Calu3 (cell line): ENCODE measurements at regions of chr9 and their contacts with region 1.

Region 1: GRCh38 chr9:72443855-72444254 is 77.6 kb upstream of the TMC1 start:
- DNase-seq: no peak
- H3K4me3 Mint-ChIP-seq: no peak overlapping the region
- H3K27ac Mint-ChIP-seq: peak overlapping the region; percentile 30
- H3K4me1 Mint-ChIP-seq: peaks cover 29% of the 10 kb centered on the region
- H3K27me3 Mint-ChIP-seq: no peaks in the 10 kb centered on the region
- CTCF ChIP-seq: no peak

Region 2: DNA sequence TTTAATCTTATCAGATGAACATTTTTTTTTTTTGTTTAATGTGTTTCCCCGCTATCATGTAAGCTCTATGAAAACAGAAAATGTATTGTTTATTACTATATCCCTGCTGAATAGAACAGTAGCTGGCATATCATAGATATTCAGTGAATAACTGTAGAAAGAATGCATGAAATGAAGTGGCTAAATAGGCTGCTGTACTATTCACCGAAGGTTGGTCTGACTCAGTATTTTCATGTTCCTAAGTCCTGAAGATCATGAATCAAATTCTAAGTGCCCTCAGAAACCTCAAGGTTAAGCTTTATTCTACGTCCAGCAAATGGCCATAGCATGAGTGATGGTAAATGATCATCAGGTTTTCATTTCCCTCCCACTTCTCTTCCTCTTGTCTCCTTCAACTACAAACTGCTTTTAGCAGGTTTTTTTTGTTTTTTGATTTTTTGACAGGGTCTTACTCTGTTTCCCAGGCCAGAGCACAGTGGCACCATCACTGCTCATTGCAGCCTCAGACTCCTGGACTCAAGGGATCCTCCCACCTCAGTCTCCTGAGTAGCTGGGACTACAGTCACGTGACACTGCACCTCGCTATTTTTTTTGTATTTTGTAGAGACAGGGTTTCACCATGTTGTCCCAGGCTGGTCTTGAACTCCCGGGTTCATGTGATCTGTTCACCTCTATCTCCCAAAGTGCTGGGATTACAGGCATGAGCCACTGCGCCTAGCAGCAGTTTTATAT is 59.7 kb before region 1 on chr9:
- CTCF ChIA-PET with region 1: no interaction called
- intact Hi-C with region 1: no loop called
- DNase-seq: no peak
- H3K4me3 Mint-ChIP-seq: no peak overlapping the region
- H3K27ac Mint-ChIP-seq: no peak overlapping the region
- H3K4me1 Mint-ChIP-seq: no peaks in the 10 kb centered on the region
- H3K27me3 Mint-ChIP-seq: no peaks in the 10 kb centered on the region
- CTCF ChIP-seq: no peak

Region 3: DNA sequence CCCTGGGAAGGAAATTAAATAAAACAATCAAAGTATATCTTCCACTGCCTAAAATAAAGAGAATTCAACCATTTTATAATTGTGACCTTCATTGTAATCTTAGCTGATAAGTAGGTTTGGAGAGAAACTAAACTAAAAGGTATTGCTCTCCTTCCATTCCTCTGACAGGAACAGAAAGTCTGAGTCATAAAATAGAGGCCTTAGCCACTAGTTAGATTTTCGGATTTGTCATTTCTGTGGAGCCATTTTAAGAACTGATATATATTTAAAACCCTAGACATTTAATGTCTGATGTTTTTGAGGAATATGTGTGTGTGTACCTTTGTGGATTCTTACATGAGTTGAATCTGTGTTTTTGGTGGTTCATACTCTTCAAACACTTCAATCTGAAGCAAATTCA is 65.8 kb after region 1 on chr9:
- CTCF ChIA-PET with region 1: no interaction called
- intact Hi-C with region 1: no loop called
- DNase-seq: no peak
- H3K4me3 Mint-ChIP-seq: no peak overlapping the region
- H3K27ac Mint-ChIP-seq: peak overlapping the region; percentile 70
- H3K4me1 Mint-ChIP-seq: peaks cover 13% of the 10 kb centered on the region
- H3K27me3 Mint-ChIP-seq: no peaks in the 10 kb centered on the region
- CTCF ChIP-seq: no peak

Region 4: DNA sequence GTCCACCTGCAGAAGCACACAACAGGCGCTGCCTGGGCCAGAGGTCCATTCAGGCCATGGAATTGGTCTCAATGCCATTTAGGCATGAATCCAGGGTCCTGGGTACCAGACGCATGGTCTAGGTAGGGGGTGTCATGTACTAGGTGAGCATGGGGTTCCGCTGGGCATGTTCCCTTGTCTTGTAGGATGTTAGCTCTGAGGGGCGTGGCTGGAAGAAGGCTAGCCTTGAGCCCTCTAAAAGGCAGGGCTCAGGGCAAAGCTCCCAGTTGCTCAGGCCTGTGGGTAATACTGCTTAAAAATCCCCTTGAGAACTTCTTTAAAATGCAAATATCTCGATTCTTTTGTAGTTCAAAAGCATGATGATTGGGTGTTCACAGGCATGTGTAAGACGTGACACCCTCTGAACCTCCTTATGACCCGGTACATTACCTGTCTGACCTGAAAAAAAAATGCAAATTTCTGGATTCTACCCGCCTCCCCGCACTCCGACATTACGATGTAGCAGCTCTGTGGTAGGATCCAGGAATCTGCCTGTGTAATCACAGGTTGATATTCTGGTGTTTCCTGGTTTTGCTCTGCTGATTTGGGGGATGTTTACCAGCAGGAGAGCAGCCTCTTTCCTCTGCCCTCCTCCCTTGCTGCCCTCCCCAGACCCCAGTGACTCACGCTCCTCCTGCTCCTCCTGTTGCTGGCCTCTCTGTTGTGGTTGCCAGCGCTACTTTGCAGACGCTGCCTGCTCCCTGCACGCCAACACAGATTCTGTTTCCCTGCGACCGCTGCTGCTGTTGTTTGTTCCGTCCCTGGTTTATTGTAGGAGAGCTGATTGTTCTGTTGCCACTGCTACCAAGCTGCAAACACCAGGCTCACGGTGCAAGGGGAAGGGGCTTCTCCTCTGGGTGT is 83.3 kb after region 1 on chr9:
- CTCF ChIA-PET with region 1: interaction called, 4 read pairs
- intact Hi-C with region 1: loop called (anchors 10 kb)
- DNase-seq: peak; percentile 77
- H3K4me3 Mint-ChIP-seq: peak overlapping the region; percentile 49
- H3K27ac Mint-ChIP-seq: peak overlapping the region; percentile 70
- H3K4me1 Mint-ChIP-seq: peaks cover 27% of the 10 kb centered on the region
- H3K27me3 Mint-ChIP-seq: no peaks in the 10 kb centered on the region
- CTCF ChIP-seq: no peak

Region 5: DNA sequence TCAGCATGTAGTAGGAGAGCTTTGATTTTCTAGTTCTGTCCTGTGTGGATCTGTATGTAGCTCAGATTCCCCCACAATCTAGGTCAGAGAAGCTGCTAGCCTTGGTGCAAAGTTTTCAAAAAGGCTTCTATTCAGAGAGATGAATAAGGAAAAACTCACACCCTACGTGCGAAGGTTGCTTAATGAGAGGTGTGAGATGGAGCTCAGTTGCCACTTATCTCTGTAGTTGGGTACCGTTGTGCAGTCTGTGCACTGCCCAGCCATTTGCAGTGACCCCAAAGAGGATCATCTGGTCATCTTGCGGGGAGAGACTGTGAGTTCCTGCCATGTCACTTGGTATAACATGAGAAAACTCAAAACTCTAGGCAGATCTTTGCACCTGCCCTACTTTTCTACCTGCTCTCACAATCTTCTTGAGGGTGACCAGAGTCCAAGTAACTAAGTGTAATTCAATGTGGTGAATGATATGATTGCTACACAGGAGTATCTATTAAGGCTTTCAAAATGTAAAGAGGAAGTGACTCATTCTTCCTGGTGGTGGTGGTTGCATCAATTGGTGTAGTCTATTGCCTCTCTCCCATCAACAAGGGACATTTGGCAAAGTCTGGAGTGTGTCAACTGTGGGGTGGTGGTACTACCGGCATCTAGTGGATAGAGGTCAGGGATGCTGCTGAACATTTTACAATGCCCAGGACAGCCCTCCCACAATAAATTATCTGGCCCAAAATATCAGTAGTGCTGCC is 142.7 kb after region 1 on chr9:
- CTCF ChIA-PET with region 1: no interaction called
- intact Hi-C with region 1: loop called (anchors 10 kb)
- DNase-seq: peak; percentile 32
- H3K4me3 Mint-ChIP-seq: no peak overlapping the region
- H3K27ac Mint-ChIP-seq: no peak overlapping the region
- H3K4me1 Mint-ChIP-seq: peaks cover 29% of the 10 kb centered on the region
- H3K27me3 Mint-ChIP-seq: no peaks in the 10 kb centered on the region
- CTCF ChIP-seq: no peak